ENCODE measurements at regions of chr2 and their contacts with region 1.

Region 1: DNA sequence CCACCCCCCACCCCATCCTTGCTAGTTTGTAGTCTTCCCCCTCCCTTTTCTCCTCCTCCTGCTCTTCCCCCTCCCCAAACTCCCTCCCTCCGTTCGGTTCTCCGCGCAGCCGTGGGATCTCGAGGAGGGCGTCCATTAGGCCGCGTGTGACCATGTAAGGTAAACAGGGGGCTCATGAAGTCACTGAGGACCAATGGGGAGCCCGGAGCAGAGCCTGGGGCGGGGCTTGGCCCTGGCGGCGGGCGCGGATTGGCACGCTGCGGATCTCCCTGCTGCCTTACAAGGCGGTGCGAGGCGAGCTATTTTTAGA is 246 bp upstream of the KLF7 start:
- DNase-seq: peak; percentile 98
- H3K4me3 Mint-ChIP-seq: peak overlapping the region; percentile 98
- H3K27ac Mint-ChIP-seq: peak overlapping the region; percentile 97
- H3K4me1 Mint-ChIP-seq: peaks cover 59% of the 10 kb centered on the region
- H3K27me3 Mint-ChIP-seq: no peaks in the 10 kb centered on the region

Region 2: GRCh38 chr2:206765242-206766056 is 400.5 kb before region 1 on chr2 and contains the starts of genes FASTKD2 and MDH1B:
- intact Hi-C with region 1: loop called (anchors 1 kb)
- DNase-seq: peak; percentile 80
- H3K4me3 Mint-ChIP-seq: peak within 1 kb of the TSS; percentile 97
- H3K27ac Mint-ChIP-seq: peak within 1 kb of the TSS; percentile 98
- H3K4me1 Mint-ChIP-seq: peaks cover 30% of the 10 kb centered on the region
- H3K27me3 Mint-ChIP-seq: peaks cover 4% of the 10 kb centered on the region
- total RNA-seq, gene FASTKD2: 32.8 and 36.7 TPM in 2 replicates
- total RNA-seq, gene MDH1B: 0.20 and 0.36 TPM in 2 replicates

Region 3: DNA sequence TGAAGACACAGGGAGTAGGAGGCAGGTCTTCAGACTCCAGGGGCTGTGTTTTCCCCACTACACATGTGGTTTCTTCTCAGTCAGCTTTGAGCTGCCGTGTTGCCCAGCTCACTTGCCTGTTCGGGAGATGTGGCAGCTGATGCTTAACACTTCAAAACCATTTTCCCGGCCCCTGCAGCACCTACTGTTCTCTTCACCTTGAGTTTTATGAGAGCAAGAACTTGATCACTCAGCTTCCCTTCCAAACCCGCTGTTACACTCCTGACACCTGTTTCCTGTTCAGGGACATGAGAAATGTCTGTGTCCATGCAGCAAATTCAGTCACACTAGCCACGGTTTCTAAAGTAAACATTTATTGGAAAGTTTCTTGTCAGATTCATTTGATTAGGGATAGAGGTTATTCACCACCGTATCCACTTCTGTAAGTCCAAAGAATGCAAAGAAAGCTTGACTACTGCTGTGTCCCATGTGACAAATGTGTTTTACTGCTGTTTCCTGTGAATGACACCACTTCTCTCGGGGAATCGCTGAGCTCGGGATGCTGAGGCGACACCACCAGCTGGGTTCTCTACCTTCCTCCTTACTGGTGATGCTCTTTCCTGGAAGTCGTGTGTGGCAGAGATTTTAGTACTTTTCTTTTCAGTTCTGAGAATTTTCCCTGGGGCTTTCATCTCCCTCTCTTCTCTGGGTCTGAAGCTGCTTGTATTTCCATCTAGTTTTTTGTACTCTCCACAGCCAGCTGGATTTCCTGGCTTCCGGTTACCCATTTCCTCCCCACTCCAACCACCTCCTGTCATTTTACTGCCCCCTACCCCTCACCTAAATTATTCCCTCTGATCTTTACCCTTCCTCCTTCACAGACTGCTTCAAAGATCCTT is 92.0 kb before region 1 on chr2:
- intact Hi-C with region 1: loop called (anchors 2 kb)
- DNase-seq: peak; percentile 39
- H3K4me3 Mint-ChIP-seq: peak overlapping the region; percentile 71
- H3K27ac Mint-ChIP-seq: peak overlapping the region; percentile 79
- H3K4me1 Mint-ChIP-seq: peaks cover 46% of the 10 kb centered on the region
- H3K27me3 Mint-ChIP-seq: no peaks in the 10 kb centered on the region

Region 4: GRCh38 chr2:207149249-207150213 is 16.5 kb before region 1 on chr2:
- intact Hi-C with region 1: loop called (anchors 1 kb)
- DNase-seq: no peak
- H3K4me3 Mint-ChIP-seq: no peak overlapping the region
- H3K27ac Mint-ChIP-seq: no peak overlapping the region
- H3K4me1 Mint-ChIP-seq: peaks cover 75% of the 10 kb centered on the region
- H3K27me3 Mint-ChIP-seq: peaks cover 6% of the 10 kb centered on the region

Region 5: GRCh38 chr2:207283356-207283755 is 117.4 kb after region 1 on chr2:
- intact Hi-C with region 1: loop called (anchors 1 kb)
- DNase-seq: no peak
- H3K4me3 Mint-ChIP-seq: peak overlapping the region; percentile 53
- H3K27ac Mint-ChIP-seq: peak overlapping the region; percentile 85
- H3K4me1 Mint-ChIP-seq: peaks cover 76% of the 10 kb centered on the region
- H3K27me3 Mint-ChIP-seq: no peaks in the 10 kb centered on the region

Region 6: GRCh38 chr2:207334624-207335371 is 168.8 kb after region 1 on chr2:
- intact Hi-C with region 1: loop called (anchors 1 kb)
- DNase-seq: no peak
- H3K4me3 Mint-ChIP-seq: peak overlapping the region; percentile 28
- H3K27ac Mint-ChIP-seq: peak overlapping the region; percentile 88
- H3K4me1 Mint-ChIP-seq: peaks cover 82% of the 10 kb centered on the region
- H3K27me3 Mint-ChIP-seq: no peaks in the 10 kb centered on the region

Region 7: DNA sequence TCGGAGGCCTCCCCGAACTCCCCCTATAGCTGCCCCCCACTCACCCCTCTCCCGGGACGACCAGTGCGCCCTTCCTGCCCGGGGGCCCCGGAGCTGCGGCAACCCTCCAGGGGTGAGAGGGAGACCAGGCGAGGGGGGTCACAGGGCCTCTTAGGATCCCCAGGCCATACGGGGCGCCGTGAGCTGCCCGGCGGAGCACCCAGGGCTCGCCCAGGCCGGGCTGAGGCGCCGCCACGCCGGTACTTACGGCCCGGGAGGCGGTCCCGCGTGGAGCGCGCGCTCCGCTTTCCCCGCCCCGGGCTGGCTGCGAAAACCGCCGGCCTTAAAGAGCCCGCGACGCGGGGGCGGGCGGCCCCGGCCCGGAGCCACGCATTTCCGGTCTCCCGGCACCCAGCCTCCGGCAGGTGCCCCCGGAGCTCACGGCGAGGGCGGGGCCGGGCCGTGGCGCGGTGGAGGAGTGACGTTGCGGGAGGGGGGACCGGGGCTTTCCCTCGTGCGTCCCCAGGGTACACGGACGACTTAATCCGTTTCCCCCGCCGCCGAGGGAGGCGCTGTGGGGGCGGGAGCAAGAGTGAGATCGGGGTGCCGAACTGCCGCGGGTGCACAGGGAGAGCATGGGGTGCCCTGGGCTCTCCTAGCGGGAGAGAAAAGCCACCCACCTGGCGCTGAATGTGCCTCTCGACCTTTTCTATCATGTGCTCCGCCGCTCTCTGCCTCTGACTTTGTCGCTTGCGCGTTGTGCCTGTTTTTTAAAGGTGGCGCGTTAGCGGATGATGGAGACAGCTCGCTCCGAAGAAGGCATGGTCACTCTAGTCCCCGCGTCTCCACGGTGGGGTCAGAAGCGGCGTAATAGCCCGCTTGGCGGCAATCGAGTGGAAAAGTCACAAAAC is 459.3 kb after region 1 on chr2 and contains the start of gene METTL21A:
- intact Hi-C with region 1: loop called (anchors 2 kb)
- DNase-seq: peak; percentile 93
- H3K4me3 Mint-ChIP-seq: peak within 1 kb of the TSS; percentile 89
- H3K27ac Mint-ChIP-seq: peak within 1 kb of the TSS; percentile 95
- H3K4me1 Mint-ChIP-seq: peaks cover 40% of the 10 kb centered on the region
- H3K27me3 Mint-ChIP-seq: no peaks in the 10 kb centered on the region
- total RNA-seq, gene METTL21A: 33.2 and 36.1 TPM in 2 replicates